H1 (cell line): ENCODE measurements at regions of chr2 and their contacts with region 1.

Region 1: DNA sequence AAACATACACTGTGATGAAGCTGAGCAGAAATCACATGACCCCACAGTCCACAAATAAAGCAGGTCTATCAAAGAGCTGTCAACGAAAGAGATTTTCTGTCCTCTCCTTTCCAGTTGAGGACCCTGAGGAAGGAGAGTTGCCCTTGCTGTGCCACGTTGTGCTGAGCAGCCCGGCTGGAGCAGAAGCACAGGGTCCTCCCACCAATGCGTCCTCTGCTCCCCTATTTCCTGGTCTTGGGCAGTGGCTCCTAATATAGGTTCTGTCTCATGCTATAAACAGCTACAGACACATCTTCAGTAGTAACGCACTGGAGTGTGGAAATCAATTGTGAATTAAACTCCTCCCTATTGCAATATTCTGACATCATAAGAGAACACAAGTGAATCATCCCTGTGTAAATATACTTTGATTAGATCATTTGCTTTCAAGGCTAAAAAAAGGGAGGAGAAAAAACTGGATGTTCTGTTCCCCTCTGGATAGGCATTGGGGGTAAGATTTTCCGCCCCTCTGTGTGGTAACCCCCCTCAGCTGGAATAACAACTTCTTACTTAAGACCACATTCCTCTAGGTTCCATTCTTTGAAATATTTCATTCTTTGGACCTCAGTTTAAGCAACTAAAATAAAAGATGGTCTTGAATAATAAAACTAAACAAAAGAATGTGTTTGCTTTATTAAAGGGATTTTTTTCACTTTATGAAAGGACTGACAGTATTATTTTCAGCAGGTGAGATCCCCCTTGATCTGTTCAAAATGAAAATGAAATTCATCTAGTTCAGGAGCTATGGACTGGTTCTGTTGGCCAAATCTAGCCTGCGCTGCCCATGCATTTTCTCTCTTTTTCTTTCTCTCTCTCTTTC is 8.3 kb upstream of the RHOB start:
- DNase-seq: no peak
- H3K4me3 ChIP-seq: no peak overlapping the region
- H3K27ac ChIP-seq: no peak overlapping the region
- H3K4me1 ChIP-seq: no peaks in the 10 kb centered on the region
- H3K27me3 ChIP-seq: no peaks in the 10 kb centered on the region
- CTCF ChIP-seq: no peak
- EP300 ChIP-seq: no peak
- POLR2A ChIP-seq: no peak
- RAD21 ChIP-seq: no peak

Region 2: DNA sequence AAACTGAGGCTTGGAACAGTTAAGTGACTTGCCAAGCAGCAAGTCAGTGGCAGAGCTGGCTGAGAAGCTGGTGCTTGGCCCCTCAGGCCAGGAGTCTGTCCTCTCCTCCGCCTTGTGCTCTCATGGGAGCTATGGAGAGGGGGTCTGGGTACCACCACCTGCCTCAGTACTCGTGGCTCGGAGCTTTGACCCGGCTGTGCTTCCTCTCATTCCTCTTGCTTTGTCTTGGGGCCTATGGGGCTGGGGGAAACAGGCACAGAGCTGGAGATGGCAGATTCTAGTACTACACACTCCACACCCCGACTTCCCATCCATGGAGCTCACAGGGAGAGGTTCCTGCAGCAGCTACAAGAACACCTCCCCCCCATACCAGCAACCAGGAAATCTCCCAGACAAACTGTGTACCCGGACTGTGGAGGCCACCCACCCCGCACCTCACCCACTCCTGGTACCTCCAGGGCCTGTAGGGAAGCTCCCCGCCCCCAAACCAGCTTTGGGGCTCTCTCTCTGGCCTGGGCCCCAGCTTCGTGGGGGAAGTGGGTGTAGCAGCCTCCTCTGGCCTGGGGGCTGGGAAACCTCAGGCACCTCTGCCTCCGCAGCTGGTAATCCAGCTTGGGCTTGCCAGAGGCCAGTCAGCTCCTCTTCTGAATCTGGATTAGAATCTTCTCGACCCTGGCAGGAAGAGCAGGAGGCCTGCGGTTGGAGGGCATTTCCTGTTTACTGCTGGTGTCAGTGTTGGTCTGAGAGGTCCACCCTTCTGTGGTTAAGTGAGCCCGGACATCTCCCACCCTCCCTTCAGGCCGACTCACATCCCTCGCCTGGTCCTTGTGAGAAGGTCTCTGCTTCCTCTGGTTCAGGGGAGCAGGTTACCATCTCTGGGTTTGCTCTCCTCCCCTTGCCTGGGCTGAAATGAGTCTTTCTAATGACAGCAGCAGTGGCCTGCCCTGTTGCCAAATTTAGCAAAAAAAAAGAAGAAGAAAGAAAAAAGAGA is 14.0 kb before region 1 on chr2:
- CTCF ChIA-PET with region 1: interaction called, 129 read pairs
- POLR2A ChIA-PET with region 1: no interaction called
- DNase-seq: no peak
- H3K4me3 ChIP-seq: no peak overlapping the region
- H3K27ac ChIP-seq: no peak overlapping the region; the same call in 1 of the 2 replicates
- H3K4me1 ChIP-seq: no peaks in the 10 kb centered on the region; a peak in 1 of 7 replicates
- H3K27me3 ChIP-seq: no peaks in the 10 kb centered on the region
- CTCF ChIP-seq: no peak
- EP300 ChIP-seq: no peak
- POLR2A ChIP-seq: no peak
- RAD21 ChIP-seq: no peak

Region 3: DNA sequence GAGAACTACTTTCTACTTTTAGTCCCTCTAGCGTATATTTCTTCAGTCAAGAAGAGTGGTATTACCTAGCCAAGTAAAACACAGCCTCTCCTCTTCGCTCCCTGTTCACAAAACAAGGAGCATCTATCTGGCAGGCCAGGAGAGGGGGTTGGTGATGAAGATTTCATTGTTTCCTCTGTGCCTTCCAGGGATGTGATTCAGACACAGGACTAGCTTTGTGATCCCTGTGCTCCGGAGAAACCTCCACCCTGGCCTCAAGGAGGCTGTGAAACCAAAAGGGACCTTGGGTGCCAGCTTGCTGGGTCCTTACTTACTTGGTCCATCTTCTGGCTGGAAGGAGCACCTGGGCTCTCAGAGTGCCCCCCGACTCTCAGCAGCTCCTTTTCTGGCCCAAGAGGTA is 14.0 kb after region 1 on chr2:
- CTCF ChIA-PET with region 1: interaction called, 20 read pairs
- POLR2A ChIA-PET with region 1: interaction called, 14 read pairs
- DNase-seq: no peak
- H3K4me3 ChIP-seq: no peak overlapping the region
- H3K27ac ChIP-seq: no peak overlapping the region
- H3K4me1 ChIP-seq: peaks cover 7 to 12% (median 11%) of the 10 kb centered on the region in 4 experiments
- H3K27me3 ChIP-seq: peaks cover 12 to 46% (median 30%) of the 10 kb centered on the region in 4 experiments
- CTCF ChIP-seq: peak in 2 of 3 experiments; percentile 28 to 34; a peak in 2 of 4 replicates
- EP300 ChIP-seq: no peak
- POLR2A ChIP-seq: no peak
- RAD21 ChIP-seq: peak; percentile 50 to 51

Region 4: DNA sequence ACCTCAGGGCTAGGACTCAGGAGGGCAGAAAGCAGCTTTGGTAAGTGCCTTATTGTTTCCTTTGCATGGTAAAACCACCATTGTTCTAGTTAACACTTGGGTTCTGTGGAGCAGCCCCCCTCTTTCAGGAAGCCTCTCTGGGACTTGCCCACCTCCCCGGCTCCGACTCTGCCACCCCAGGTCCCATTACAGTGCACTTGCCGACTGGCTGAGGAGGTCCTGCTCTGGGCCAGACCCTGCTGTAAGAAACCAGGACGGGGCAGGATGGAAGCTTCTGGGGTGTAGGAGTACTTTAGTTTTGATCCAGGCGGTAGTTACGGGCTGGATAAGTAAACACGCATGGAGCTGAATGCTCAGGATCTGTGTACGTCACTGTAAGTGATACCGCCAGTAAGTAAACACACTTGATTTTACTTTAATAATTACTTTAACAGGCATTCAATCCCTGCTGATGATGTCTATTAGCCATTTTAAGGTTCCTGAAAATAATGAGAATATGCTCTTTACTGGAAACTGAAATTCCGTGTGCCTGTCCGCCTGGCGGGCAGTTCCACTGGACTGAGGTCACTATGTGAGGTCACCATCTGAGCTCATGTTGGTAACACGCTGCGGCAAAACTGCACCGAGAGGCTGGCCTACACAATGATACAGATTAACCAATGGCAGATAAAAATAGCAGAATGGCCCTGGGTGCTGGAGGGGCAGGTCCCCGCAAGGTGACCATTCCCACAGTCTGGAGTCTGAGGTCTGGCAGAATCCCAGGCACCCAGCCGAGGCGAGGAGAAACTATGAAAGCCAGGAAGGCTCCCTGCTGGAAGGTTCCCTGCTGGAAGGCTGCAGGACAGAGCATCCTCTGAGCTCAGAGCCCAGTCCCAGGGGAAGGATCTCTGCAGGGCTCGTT is 187.2 kb after region 1 on chr2:
- CTCF ChIA-PET with region 1: interaction called, 367 read pairs
- POLR2A ChIA-PET with region 1: no interaction called
- DNase-seq: no peak
- H3K4me3 ChIP-seq: no peak overlapping the region
- H3K27ac ChIP-seq: no peak overlapping the region
- H3K4me1 ChIP-seq: no peaks in the 10 kb centered on the region
- H3K27me3 ChIP-seq: no peaks in the 10 kb centered on the region
- CTCF ChIP-seq: no peak
- EP300 ChIP-seq: no peak
- POLR2A ChIP-seq: no peak
- RAD21 ChIP-seq: no peak